HepG2 (cell line): ENCODE measurements at regions of chr3 and their contacts with region 1.

Region 1: GRCh38 chr3:188000361-188000861 is 153.5 kb upstream of the LPP start:
- DNase-seq: no peak
- ATAC-seq: peak; percentile 17
- H3K4me3 ChIP-seq: no peak overlapping the region
- H3K27ac ChIP-seq: peak overlapping the region; percentile 90
- H3K4me1 ChIP-seq: peaks cover 99% of the 10 kb centered on the region
- H3K27me3 ChIP-seq: no peaks in the 10 kb centered on the region
- CTCF ChIP-seq: peak; percentile 32; the same call in 1 of the 2 replicates
- EP300 ChIP-seq: peak in 1 of 2 experiments; percentile 53; a peak in 1 of 4 replicates
- POLR2A ChIP-seq: no peak
- RAD21 ChIP-seq: no peak

Region 2: GRCh38 chr3:187902041-187902471 is 98.4 kb before region 1 on chr3:
- CTCF ChIA-PET with region 1: no interaction called
- POLR2A ChIA-PET with region 1: no interaction called
- in situ Hi-C with region 1: no loop called
- intact Hi-C with region 1: no loop called
- DNase-seq: no peak
- ATAC-seq: no peak
- H3K4me3 ChIP-seq: no peak overlapping the region
- H3K27ac ChIP-seq: no peak overlapping the region
- H3K4me1 ChIP-seq: peaks cover 6% of the 10 kb centered on the region; the same call in 1 of the 2 replicates
- H3K27me3 ChIP-seq: peaks cover 2 to 4% of the 10 kb centered on the region in 2 experiments; a peak in 1 of 5 replicates
- CTCF ChIP-seq: no peak
- EP300 ChIP-seq: no peak
- POLR2A ChIP-seq: no peak
- RAD21 ChIP-seq: no peak

Region 3: GRCh38 chr3:187955076-187955952 is 45.1 kb before region 1 on chr3:
- CTCF ChIA-PET with region 1: no interaction called
- POLR2A ChIA-PET with region 1: interaction called, 15 read pairs
- in situ Hi-C with region 1: no loop called
- intact Hi-C with region 1: no loop called
- DNase-seq: peak; percentile 45
- ATAC-seq: peak; percentile 65
- H3K4me3 ChIP-seq: no peak overlapping the region; a peak in 1 of 6 replicates
- H3K27ac ChIP-seq: peak overlapping the region; percentile 8
- H3K4me1 ChIP-seq: peaks cover 52% of the 10 kb centered on the region
- H3K27me3 ChIP-seq: peaks cover 0 to 4% of the 10 kb centered on the region in 2 experiments; a peak in 2 of 5 replicates
- CTCF ChIP-seq: no peak
- EP300 ChIP-seq: peak in 1 of 2 experiments; percentile 67; a peak in 2 of 4 replicates
- POLR2A ChIP-seq: no peak
- RAD21 ChIP-seq: no peak

Region 4: DNA sequence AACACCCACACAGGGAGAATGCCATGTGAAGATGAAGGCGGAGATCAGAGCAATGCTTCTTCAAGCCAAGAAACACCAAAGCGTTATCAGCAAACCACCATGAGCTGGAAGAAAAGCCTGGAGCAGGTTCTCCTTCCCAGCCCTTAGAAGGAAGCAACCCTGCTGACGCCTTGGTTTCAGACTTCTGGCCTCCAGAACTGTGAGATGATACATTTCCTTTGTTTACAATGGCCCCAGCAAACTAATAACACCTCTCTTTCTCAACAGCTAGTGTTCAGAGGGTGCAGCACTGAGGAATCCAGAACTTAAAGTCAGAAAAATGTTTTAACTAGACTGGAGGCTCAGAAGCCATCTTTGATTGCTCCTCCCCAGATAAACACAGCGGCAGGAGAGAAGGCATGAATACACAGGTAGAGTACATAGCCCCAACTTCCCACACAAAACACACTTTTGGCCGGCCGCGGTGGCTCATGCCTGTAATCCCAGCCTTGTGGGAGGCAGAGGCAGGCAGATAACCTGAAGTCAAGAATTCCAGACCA is 21.2 kb after region 1 on chr3:
- CTCF ChIA-PET with region 1: no interaction called
- POLR2A ChIA-PET with region 1: interaction called, 46 read pairs
- in situ Hi-C with region 1: no loop called
- intact Hi-C with region 1: loop called (anchors 1 kb)
- DNase-seq: peak; percentile 85
- ATAC-seq: peak; percentile 86
- H3K4me3 ChIP-seq: peak overlapping the region in 1 of 3 experiments; percentile 14; a peak in 1 of 6 replicates
- H3K27ac ChIP-seq: peak overlapping the region; percentile 78
- H3K4me1 ChIP-seq: peaks cover 60% of the 10 kb centered on the region
- H3K27me3 ChIP-seq: no peaks in the 10 kb centered on the region
- CTCF ChIP-seq: no peak
- EP300 ChIP-seq: peak in 1 of 2 experiments; percentile 95; a peak in 2 of 4 replicates
- POLR2A ChIP-seq: no peak
- RAD21 ChIP-seq: no peak

Region 5: DNA sequence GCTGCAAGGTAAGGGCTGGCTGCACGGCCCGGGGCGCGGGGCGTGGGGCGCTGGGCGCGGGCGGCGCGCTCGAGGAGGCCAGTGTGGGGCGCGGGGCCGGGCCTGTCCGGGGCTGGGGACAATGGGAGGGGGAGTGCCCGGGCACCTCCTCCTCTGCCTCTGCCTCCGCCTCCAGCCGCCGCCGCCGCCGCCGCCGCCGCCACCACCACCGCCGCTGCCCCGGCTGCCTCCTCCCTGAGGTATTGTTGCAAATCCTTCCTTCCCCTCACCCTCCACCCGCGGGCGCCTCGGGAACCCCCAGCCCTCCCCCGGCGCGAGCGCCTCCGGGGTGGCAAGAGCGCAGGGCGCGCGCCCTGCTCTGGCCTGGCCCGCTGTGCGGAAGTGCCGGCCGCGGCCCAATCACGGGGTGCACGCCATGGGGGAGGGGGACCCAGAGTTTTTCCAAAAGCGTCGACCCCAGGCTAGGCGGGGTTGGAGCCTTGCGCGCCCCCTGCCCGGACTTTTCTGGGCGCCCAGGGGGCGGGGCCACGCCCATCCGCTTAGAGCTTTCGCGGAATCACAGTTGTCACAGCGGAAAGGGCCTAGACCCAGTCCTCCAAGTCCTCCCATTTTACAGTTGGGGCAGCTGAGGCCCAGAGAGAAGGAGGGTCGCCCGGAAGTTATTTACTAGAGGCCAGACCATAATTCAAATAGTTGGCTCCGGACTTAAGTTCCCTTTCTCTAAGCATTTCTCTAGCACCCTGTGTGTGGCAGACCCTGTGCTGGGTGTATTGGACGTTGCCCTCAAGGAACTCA is 153.8 kb after region 1 on chr3 and contains the start of gene LPP:
- CTCF ChIA-PET with region 1: no interaction called
- POLR2A ChIA-PET with region 1: interaction called, 16 read pairs
- in situ Hi-C with region 1: no loop called
- intact Hi-C with region 1: no loop called
- DNase-seq: peak; percentile 47
- ATAC-seq: peak; percentile 88
- H3K4me3 ChIP-seq: peak within 1 kb of the TSS; percentile 83 to 92 (median 88)
- H3K27ac ChIP-seq: peak within 1 kb of the TSS; percentile 73
- H3K4me1 ChIP-seq: peaks cover 64% of the 10 kb centered on the region
- H3K27me3 ChIP-seq: no peaks in the 10 kb centered on the region
- CTCF ChIP-seq: peak; percentile 39
- EP300 ChIP-seq: peak in 1 of 2 experiments; percentile 4; a peak in 1 of 4 replicates
- POLR2A ChIP-seq: no peak; a peak in 1 of 4 replicates
- RAD21 ChIP-seq: peak; percentile 44
- total RNA-seq, gene LPP: 29.9 and 41.6 TPM in 2 replicates

Region 6: DNA sequence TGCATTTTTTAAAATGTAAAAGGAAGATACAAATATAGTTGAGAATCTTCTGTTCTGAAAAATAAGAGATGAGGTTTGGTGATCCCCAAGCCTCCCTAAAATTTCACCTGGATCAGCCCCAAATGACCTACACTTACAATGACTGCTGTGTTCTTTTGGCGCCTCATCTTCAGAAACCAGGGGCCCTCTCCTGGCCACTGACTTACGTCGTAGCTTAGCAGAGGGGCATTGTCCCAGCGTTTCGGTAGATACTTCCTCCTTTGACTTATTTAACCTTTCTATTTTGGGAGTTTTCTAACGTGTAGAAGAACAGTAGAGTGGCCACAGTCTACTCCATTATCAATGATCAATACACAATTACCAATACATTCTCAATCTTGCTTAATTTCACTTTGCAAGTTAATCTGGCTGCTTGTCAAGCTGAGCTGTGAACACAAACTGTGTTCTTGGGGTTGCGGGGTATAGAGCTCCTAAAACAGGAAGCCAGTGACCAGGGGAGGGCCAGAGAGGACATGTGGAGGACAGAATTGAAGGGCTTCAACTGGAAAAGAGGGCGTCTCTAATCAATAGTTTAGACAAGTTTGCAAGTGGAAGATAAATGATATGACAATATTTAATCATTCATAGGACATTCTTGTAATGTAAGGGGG is 573.0 kb after region 1 on chr3:
- CTCF ChIA-PET with region 1: no interaction called
- POLR2A ChIA-PET with region 1: no interaction called
- in situ Hi-C with region 1: no loop called
- intact Hi-C with region 1: no loop called
- DNase-seq: no peak
- ATAC-seq: no peak
- H3K4me3 ChIP-seq: no peak overlapping the region
- H3K27ac ChIP-seq: no peak overlapping the region
- H3K4me1 ChIP-seq: no peaks in the 10 kb centered on the region
- H3K27me3 ChIP-seq: no peaks in the 10 kb centered on the region
- CTCF ChIP-seq: no peak
- EP300 ChIP-seq: no peak
- POLR2A ChIP-seq: no peak
- RAD21 ChIP-seq: no peak

Region 7: DNA sequence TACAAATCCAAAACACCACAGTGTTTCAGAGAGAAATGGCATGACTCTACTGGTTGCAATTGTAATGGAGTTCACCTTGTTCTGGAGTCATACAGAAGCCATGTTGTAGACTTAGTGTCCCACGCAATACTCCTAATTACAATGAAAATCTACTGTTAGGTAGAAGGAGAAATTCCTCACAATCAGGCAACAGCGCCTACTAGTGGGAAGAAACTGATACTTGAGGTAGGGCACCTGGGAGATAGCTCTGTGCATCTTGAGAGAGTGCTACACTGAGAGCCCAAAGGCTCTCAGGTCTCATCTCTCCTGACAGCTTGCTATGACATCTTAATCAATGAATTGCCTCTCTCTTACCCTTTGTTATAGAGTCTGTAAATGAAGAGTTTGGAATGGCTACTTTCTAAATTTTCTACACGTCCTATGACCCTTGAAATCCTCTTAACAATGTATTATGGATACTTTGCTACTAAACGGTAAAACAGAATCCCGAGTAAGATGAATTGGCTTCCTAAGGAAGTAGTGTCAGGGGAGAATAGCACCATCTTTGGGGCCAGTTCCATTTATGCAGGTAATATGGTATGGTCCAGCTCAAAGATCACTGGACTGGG is 748.7 kb after region 1 on chr3:
- CTCF ChIA-PET with region 1: no interaction called
- POLR2A ChIA-PET with region 1: interaction called, 10 read pairs
- in situ Hi-C with region 1: no loop called
- intact Hi-C with region 1: no loop called
- DNase-seq: no peak
- ATAC-seq: no peak
- H3K4me3 ChIP-seq: no peak overlapping the region
- H3K27ac ChIP-seq: peak overlapping the region; percentile 99
- H3K4me1 ChIP-seq: peaks cover 61% of the 10 kb centered on the region
- H3K27me3 ChIP-seq: no peaks in the 10 kb centered on the region
- CTCF ChIP-seq: no peak
- EP300 ChIP-seq: no peak
- POLR2A ChIP-seq: no peak
- RAD21 ChIP-seq: no peak